ENCODE measurements at regions of chr14 and their contacts with region 1.

Region 1: GRCh38 chr14:22955702-22956569 is 954 bp downstream of the HAUS4 start:
- DNase-seq: peak; percentile 37
- H3K4me3 ChIP-seq: peak overlapping the region; percentile 78
- H3K27ac ChIP-seq: peak overlapping the region; percentile 74
- H3K4me1 ChIP-seq: peaks cover 18% of the 10 kb centered on the region
- CTCF ChIP-seq: no peak

Region 2: GRCh38 chr14:22929104-22929847 is 26.7 kb before region 1 on chr14 and contains the start of gene PRMT5:
- CTCF ChIA-PET with region 1: interaction called, 8 read pairs
- POLR2A ChIA-PET with region 1: interaction called, 18 read pairs
- intact Hi-C with region 1: loop called (anchors 1 kb)
- DNase-seq: peak; percentile 99
- H3K4me3 ChIP-seq: peak within 1 kb of the TSS; percentile 91
- H3K27ac ChIP-seq: peak within 1 kb of the TSS; percentile 70
- H3K4me1 ChIP-seq: peaks cover 32% of the 10 kb centered on the region
- CTCF ChIP-seq: no peak
- total RNA-seq, gene PRMT5: 82.2 and 93.1 TPM in 2 replicates

Region 3: DNA sequence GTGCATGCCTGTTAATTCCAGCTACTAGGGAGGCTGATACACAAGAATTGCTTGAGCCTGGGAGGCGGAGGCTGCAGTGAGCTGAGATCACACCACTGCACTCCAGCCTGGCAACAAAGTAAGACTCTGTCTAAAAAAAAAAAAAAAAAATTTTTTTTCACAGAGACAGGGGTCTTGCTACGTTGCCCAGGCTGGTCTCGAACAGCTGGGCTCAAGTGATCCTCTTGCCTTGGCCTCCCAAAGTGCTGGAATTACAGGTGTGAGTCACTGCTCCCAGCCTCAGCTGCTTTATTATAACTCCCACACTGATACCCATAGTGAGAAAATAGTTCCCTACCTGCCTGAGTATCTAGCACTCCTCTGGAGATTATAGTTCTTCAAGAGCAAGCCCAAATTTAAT is 10.3 kb before region 1 on chr14:
- CTCF ChIA-PET with region 1: interaction called, 4 read pairs
- POLR2A ChIA-PET with region 1: interaction called, 28 read pairs
- intact Hi-C with region 1: no loop called
- DNase-seq: no peak
- H3K4me3 ChIP-seq: no peak overlapping the region
- H3K27ac ChIP-seq: no peak overlapping the region
- H3K4me1 ChIP-seq: no peaks in the 10 kb centered on the region
- CTCF ChIP-seq: no peak

Region 4: GRCh38 chr14:22973217-22974032 is 17.5 kb after region 1 on chr14:
- CTCF ChIA-PET with region 1: interaction called, 10 read pairs
- POLR2A ChIA-PET with region 1: interaction called, 12 read pairs
- intact Hi-C with region 1: no loop called
- DNase-seq: peak; percentile 65
- H3K4me3 ChIP-seq: no peak overlapping the region
- H3K27ac ChIP-seq: no peak overlapping the region
- H3K4me1 ChIP-seq: peaks cover 17% of the 10 kb centered on the region
- CTCF ChIP-seq: peak; percentile 85

Measured in OCI-LY7 (cell line).